ENCODE measurements at regions of chrX and their contacts with region 1.

Region 1: DNA sequence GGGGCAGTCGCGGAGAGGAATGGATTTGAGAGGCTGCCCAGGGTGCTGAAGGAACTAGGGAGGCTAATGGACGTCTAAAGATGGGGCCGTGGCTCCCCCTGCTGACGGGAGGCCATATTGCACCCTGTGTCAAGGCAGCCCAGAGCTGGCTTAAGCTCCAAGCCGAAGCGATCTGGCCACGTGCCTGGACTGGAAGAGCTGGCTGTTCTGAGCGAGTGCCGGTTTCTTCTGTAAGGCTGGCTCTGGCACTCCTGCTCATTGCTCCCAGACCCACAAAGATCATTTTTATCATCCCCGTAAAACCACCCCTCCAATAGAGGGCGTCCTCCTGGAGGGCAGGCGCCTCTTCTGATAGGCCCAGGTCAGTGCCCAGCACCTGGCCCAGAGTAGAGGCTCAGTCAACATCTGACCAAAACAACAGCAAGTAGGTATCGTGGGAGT is 5.6 kb downstream of the PNCK start:
- DNase-seq: peak in 1 of 2 donors; percentile 89
- H3K4me3 ChIP-seq: no peak overlapping the region
- H3K27ac ChIP-seq: no peak overlapping the region
- H3K4me1 ChIP-seq: no peaks in the 10 kb centered on the region
- H3K27me3 ChIP-seq: no peaks in the 10 kb centered on the region
- CTCF ChIP-seq: peak; percentile 54 to 71 (median 70)

Region 2: GRCh38 chrX:152958524-152959465 is 709.2 kb before region 1 on chrX:
- intact Hi-C with region 1: loop called (anchors 2 kb)
- DNase-seq: peak; percentile 42 to 93
- H3K4me3 ChIP-seq: peak overlapping the region; percentile 29 to 36
- H3K27ac ChIP-seq: peak overlapping the region; percentile 40 to 54
- H3K4me1 ChIP-seq: no peaks in the 10 kb centered on the region
- H3K27me3 ChIP-seq: no peaks in the 10 kb centered on the region
- CTCF ChIP-seq: peak; percentile 80 to 86 (median 84)

Region 3: GRCh38 chrX:153032397-153033118 is 635.4 kb before region 1 on chrX:
- intact Hi-C with region 1: loop called (anchors 10 kb)
- DNase-seq: peak in 1 of 2 donors; percentile 80
- H3K4me3 ChIP-seq: peak overlapping the region; percentile 26 to 55
- H3K27ac ChIP-seq: no peak overlapping the region
- H3K4me1 ChIP-seq: no peaks in the 10 kb centered on the region
- H3K27me3 ChIP-seq: no peaks in the 10 kb centered on the region
- CTCF ChIP-seq: peak; percentile 76 to 85 (median 85)

Region 4: GRCh38 chrX:153539171-153539978 is 128.6 kb before region 1 on chrX:
- intact Hi-C with region 1: loop called (anchors 5 kb)
- DNase-seq: peak in 1 of 2 donors; percentile 74
- H3K4me3 ChIP-seq: no peak overlapping the region
- H3K27ac ChIP-seq: no peak overlapping the region
- H3K4me1 ChIP-seq: no peaks in the 10 kb centered on the region
- H3K27me3 ChIP-seq: no peaks in the 10 kb centered on the region
- CTCF ChIP-seq: peak; percentile 74 to 87 (median 83)

Region 5: GRCh38 chrX:153554519-153555167 is 113.3 kb before region 1 on chrX:
- intact Hi-C with region 1: loop called (anchors 5 kb)
- DNase-seq: peak in 1 of 2 donors; percentile 69
- H3K4me3 ChIP-seq: no peak overlapping the region
- H3K27ac ChIP-seq: no peak overlapping the region
- H3K4me1 ChIP-seq: no peaks in the 10 kb centered on the region
- H3K27me3 ChIP-seq: no peaks in the 10 kb centered on the region
- CTCF ChIP-seq: peak; percentile 33 to 58 (median 52)

Region 6: GRCh38 chrX:153609917-153610428 is 58.0 kb before region 1 on chrX:
- intact Hi-C with region 1: loop called (anchors 2 kb)
- DNase-seq: peak in 1 of 2 donors; percentile 83
- H3K4me3 ChIP-seq: peak overlapping the region; percentile 34 to 66
- H3K27ac ChIP-seq: no peak overlapping the region
- H3K4me1 ChIP-seq: no peaks in the 10 kb centered on the region
- H3K27me3 ChIP-seq: no peaks in the 10 kb centered on the region
- CTCF ChIP-seq: peak; percentile 66 to 78 (median 66)

Region 7: GRCh38 chrX:153862369-153863250 is 194.6 kb after region 1 on chrX:
- intact Hi-C with region 1: no loop called
- DNase-seq: peak in 1 of 2 donors; percentile 47
- H3K4me3 ChIP-seq: no peak overlapping the region
- H3K27ac ChIP-seq: no peak overlapping the region
- H3K4me1 ChIP-seq: no peaks in the 10 kb centered on the region
- H3K27me3 ChIP-seq: peaks cover 4% of the 10 kb centered on the region
- CTCF ChIP-seq: no peak

Measured in ascending aorta (tissue), 2 donors.